Cardiac septum (tissue), 1 donor: ENCODE measurements at regions of chr1 and their contacts with region 1.

Region 1: DNA sequence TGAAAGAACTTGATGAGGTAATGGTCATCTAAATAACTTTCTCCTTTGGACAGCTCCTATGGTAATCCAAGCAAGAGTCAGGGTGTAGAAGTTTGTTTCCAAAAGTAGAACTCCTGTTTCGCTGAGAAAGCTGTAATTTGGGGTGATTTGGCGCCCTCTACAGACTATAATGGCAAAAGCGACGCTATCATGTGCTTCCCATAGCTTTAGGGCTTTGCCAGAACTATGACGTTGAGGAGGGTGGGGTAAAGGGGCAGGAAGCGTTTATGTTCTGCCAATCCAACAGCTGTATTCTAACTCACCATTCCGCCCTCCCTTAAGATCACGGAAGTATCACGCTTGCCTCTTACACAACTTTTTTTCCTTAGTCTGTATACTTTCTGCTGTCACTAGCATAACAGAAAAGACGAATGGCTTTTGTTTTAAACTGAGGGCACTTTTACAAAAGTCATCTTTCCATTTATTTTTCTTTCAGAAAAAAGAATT is at the start of gene FMO4:
- DNase-seq: peak; percentile 88
- total RNA-seq, gene FMO4: 5.3 TPM

Region 2: DNA sequence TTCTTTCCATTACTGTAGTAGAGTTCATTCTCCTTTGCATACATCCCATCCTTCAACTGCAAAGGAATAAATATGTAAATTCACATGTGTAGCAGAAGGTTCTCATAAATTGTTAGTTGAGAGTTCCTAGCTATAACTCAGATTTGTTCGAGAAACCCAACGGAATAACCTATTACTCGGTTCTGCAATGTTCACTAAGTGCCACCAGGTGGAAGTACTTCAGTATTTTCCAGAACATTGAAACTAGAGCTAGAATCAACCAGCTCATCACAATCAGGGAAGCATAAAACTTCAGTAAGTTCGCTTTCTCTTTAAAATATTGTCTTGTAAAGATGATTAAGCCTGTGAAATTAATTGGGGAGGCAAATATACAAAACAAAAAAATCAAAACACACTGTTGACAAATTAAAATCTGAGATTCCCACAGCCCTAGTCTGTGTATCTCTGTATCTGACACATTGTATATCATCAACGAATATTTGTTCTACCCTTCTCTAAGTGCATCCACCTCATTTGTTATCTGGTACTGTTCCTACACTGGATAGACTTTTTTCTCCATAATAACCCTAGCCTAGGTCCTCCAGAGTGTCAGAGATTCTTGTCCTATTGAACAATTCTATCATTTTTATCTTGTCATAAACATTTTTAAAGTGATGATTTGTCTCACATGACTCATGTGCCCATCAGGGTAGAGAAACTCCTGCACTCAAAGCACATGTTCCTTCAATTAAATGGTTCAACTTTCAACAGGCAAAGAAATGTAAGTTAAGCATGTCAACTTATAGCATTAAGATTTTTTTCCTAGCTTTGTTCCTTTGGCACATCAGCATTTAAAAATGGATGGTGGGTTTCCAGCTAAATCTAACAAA is 346.6 kb before region 1 on chr1:
- intact Hi-C with region 1: loop called (anchors 5 kb)
- DNase-seq: no peak

Region 3: GRCh38 chr1:171245458-171246064 is 68.3 kb before region 1 on chr1:
- intact Hi-C with region 1: loop called (anchors 2 kb)
- DNase-seq: no peak

Region 4: DNA sequence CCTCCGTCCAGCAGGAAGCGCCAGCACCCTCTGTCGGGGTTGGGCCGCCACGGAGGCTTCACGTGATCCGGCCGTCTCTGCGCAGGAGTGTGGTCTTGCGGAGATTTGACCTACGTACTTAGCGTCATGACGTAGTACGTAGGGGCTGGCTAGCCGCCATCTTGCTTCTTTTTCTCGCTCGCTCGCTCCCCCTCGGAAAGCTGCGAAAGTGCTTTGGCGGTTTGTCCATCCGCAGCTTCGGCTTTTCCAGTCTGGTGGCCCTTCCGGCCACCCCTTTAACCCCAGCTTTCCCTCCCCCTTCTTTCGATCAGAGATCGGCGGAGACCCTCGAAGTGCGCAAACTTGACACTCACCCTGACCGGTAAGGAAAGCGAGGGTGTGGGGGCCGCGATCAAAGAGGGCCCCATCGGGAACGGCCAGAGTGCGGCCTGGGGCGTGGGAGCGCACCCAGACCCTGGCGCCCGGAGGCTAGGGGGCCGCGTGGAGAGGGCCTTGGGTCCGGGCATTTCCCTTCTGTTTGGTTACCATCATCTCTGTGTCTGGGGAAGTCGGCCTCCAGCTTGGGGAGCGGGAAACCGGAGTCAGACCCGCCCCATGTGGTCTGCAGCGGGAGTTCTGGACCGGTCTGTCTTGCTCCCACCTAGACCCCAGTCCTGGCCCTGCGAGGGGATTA is 171.6 kb after region 1 on chr1 and contains the start of gene PRRC2C:
- intact Hi-C with region 1: loop called (anchors 10 kb)
- DNase-seq: peak; percentile 98
- total RNA-seq, gene PRRC2C: 68.6 TPM